CD4-positive, alpha-beta memory T cell (primary cell): ENCODE measurements at regions of chr4 and their contacts with region 1.

Region 1: DNA sequence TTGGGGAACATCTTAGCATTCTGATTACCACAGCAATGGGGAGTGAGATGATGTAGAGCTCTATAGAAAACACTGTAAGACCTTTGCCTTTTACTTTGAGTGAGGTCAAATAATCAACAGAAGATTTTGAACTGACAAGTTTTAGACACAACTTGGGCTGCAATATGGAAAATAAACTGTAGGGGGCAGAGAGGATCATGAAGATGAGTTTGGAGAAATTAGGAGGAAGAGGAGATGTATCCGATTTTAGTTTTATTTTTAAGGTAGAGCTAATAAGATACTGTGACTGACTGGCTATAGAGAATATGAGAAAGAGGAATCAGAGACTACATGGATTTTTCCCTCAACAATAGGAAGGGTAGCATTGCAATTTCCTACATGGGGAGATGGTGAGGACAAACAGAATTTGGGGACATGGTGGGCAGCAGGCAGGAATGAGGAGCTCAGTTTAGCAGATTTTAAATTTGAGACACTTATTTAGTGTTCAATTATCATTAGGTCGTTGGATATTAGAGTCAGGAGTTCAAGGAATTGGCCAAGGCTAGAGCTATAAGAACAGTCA is 563.1 kb downstream of the INPP4B start:
- DNase-seq: peak; percentile 16 to 47 (median 43)
- H3K4me3 ChIP-seq: no peak overlapping the region
- H3K4me3 Mint-ChIP-seq: no peak overlapping the region
- H3K27ac ChIP-seq: no peak overlapping the region
- H3K27ac Mint-ChIP-seq: no peak overlapping the region
- H3K4me1 ChIP-seq: peaks cover 63% of the 10 kb centered on the region
- H3K4me1 Mint-ChIP-seq: peaks cover 16 to 23% (median 20%) of the 10 kb centered on the region in 4 donors
- H3K27me3 ChIP-seq: no peaks in the 10 kb centered on the region
- H3K27me3 Mint-ChIP-seq: no peaks in the 10 kb centered on the region

Region 2: GRCh38 chr4:142265536-142265935 is 17.4 kb before region 1 on chr4:
- CTCF ChIA-PET with region 1: interaction called, 13 read pairs
- POLR2A ChIA-PET with region 1: interaction called, 3 read pairs
- intact Hi-C with region 1: loop called (anchors 2 kb)
- DNase-seq: no peak
- H3K4me3 ChIP-seq: no peak overlapping the region
- H3K4me3 Mint-ChIP-seq: peak overlapping the region in 5 of 8 donors; percentile 13 to 78 (median 46)
- H3K27ac ChIP-seq: no peak overlapping the region
- H3K27ac Mint-ChIP-seq: peak overlapping the region; percentile 33 to 87 (median 78)
- H3K4me1 ChIP-seq: peaks cover 70% of the 10 kb centered on the region
- H3K4me1 Mint-ChIP-seq: peaks cover 63 to 93% (median 78%) of the 10 kb centered on the region in 4 donors
- H3K27me3 ChIP-seq: no peaks in the 10 kb centered on the region
- H3K27me3 Mint-ChIP-seq: no peaks in the 10 kb centered on the region

Region 3: DNA sequence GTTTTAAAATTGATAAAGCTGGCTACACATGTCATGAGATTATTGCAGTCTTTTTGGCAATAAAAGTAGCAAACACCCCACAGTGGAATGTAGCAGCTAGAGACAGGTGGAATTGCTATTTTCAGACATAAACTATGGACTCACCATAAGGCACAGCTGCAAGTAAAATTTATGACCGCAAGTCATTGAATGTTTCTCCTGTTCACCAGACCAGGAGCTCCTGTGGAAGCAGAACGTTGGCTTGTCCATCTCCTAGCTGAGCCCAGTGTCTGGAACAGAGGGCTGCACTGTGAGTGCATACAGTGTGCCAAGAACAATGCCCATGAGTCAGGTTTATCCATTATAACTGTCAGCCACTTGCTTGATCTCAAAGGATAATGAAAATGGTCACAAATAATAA is 24.9 kb after region 1 on chr4:
- CTCF ChIA-PET with region 1: interaction called, 22 read pairs
- POLR2A ChIA-PET with region 1: interaction called, 3 read pairs
- intact Hi-C with region 1: no loop called
- DNase-seq: no peak
- H3K4me3 ChIP-seq: no peak overlapping the region
- H3K4me3 Mint-ChIP-seq: no peak overlapping the region
- H3K27ac ChIP-seq: no peak overlapping the region
- H3K27ac Mint-ChIP-seq: peak overlapping the region in 2 of 7 donors; percentile 15 to 30
- H3K4me1 ChIP-seq: peaks cover 54% of the 10 kb centered on the region
- H3K4me1 Mint-ChIP-seq: peaks cover 20 to 60% (median 47%) of the 10 kb centered on the region in 4 donors
- H3K27me3 ChIP-seq: no peaks in the 10 kb centered on the region
- H3K27me3 Mint-ChIP-seq: no peaks in the 10 kb centered on the region

Region 4: GRCh38 chr4:142719854-142720541 is 437.0 kb after region 1 on chr4:
- CTCF ChIA-PET with region 1: interaction called, 35 read pairs
- POLR2A ChIA-PET with region 1: interaction called, 4 read pairs
- intact Hi-C with region 1: loop called (anchors 1 kb)
- DNase-seq: peak in 4 of 5 donors; percentile 54 to 60 (median 57)
- H3K4me3 ChIP-seq: no peak overlapping the region
- H3K4me3 Mint-ChIP-seq: peak overlapping the region in 5 of 8 donors; percentile 19 to 62 (median 49)
- H3K27ac ChIP-seq: no peak overlapping the region
- H3K27ac Mint-ChIP-seq: peak overlapping the region in 5 of 7 donors; percentile 36 to 77 (median 69)
- H3K4me1 ChIP-seq: peaks cover 14% of the 10 kb centered on the region
- H3K4me1 Mint-ChIP-seq: peaks cover 11 to 26% (median 13%) of the 10 kb centered on the region in 4 donors
- H3K27me3 ChIP-seq: no peaks in the 10 kb centered on the region
- H3K27me3 Mint-ChIP-seq: peaks cover 0 to 1% of the 10 kb centered on the region in 2 donors